Mammary epithelial cell (primary cell): ENCODE measurements at regions of chr9 and their contacts with region 1.

Region 1: DNA sequence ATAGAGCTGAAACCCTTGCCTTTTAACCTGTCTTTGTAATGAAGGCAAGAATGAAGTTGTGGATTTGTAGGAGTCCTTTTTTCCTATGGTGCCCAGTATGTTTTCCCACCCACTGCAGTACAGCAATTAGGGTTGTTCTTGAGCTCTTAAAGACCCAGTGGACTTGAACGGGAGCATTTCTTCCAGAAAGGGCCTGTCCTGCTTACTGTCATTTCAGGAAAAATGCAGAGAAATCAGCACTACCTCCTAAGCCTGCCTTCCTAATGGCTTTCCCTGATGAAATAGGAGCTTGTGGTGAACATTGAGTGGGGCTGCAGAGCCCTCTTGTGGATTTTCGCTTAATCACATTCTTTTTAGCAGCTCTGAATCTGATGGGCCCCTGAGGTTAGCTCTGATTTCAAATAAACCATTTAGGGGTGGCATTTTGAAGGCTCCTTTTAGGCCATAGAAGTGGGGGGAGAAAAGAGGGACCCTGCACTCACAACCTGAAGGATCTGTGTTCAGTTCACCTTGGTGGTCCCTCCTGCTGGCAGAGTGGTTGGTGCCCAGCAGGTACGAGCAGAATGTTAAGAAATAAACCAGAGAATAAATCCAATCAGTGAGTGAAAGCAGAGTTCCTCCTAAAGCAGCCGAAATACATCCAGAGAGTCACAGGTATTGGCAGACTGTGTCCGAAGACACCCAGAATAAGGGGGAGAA is 188.0 kb upstream of the KLF9 start:
- DNase-seq: peak; percentile 64
- H3K4me3 ChIP-seq: no peak overlapping the region
- H3K27ac ChIP-seq: no peak overlapping the region
- H3K4me1 ChIP-seq: peaks cover 17% of the 10 kb centered on the region
- H3K27me3 ChIP-seq: no peaks in the 10 kb centered on the region
- CTCF ChIP-seq: peak; percentile 71 to 80

Region 2: DNA sequence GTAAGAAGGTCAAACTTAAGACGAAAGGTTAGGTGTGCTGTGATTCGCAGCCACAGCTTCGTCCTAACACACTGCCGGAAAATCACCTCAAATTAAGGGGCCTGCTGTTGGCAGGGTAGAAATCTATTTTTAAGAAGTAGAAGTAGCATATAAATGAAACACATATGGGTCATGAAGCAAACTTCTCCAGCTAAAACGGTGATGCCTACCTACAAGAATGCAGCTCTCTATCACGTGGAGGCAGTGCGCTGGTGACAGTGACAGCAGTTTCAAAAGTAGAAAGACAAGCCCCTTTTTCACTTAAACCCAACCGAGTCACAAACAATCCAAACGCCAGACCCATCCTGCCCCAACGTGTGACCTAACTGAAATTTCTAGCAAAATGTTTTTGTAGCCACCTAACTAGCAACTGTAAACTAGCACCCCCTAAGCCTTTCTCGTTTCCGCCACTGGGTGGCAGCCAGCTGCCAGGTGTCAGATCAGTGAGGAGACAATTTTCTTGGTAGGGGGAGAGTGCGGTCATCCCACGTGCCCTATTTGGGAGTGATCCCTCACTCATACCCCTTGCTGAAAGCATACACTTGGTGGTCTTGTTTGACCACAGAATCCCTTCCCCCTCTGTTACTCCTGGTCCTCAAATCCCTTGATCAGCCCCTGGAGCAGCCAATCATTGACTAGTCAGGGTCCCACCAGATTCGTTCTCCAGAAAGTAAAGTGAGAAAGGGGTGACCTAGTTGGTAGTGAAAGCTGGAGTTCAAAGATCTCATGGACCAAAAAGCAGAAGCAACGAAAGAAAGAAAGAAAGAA is 630.6 kb before region 1 on chr9:
- CTCF ChIA-PET with region 1: interaction called, 3 read pairs
- dilution Hi-C with region 1: no loop called
- in situ Hi-C with region 1: loop called in 1 of 2 experiments (anchors 25 kb)
- intact Hi-C with region 1: loop called (anchors 1 kb)
- DNase-seq: peak; percentile 46
- H3K4me3 ChIP-seq: no peak overlapping the region
- H3K27ac ChIP-seq: no peak overlapping the region
- H3K4me1 ChIP-seq: peaks cover 13% of the 10 kb centered on the region
- H3K27me3 ChIP-seq: no peaks in the 10 kb centered on the region
- CTCF ChIP-seq: peak; percentile 89 to 97

Region 3: GRCh38 chr9:70340572-70340971 is 261.9 kb before region 1 on chr9:
- CTCF ChIA-PET with region 1: interaction called, 4 read pairs
- dilution Hi-C with region 1: no loop called
- in situ Hi-C with region 1: loop called in 1 of 2 experiments (anchors 10 kb)
- intact Hi-C with region 1: loop called (anchors 1 kb)
- DNase-seq: no peak
- H3K4me3 ChIP-seq: no peak overlapping the region
- H3K27ac ChIP-seq: no peak overlapping the region
- H3K4me1 ChIP-seq: no peaks in the 10 kb centered on the region
- H3K27me3 ChIP-seq: no peaks in the 10 kb centered on the region
- CTCF ChIP-seq: peak; percentile 31 to 43

Region 4: DNA sequence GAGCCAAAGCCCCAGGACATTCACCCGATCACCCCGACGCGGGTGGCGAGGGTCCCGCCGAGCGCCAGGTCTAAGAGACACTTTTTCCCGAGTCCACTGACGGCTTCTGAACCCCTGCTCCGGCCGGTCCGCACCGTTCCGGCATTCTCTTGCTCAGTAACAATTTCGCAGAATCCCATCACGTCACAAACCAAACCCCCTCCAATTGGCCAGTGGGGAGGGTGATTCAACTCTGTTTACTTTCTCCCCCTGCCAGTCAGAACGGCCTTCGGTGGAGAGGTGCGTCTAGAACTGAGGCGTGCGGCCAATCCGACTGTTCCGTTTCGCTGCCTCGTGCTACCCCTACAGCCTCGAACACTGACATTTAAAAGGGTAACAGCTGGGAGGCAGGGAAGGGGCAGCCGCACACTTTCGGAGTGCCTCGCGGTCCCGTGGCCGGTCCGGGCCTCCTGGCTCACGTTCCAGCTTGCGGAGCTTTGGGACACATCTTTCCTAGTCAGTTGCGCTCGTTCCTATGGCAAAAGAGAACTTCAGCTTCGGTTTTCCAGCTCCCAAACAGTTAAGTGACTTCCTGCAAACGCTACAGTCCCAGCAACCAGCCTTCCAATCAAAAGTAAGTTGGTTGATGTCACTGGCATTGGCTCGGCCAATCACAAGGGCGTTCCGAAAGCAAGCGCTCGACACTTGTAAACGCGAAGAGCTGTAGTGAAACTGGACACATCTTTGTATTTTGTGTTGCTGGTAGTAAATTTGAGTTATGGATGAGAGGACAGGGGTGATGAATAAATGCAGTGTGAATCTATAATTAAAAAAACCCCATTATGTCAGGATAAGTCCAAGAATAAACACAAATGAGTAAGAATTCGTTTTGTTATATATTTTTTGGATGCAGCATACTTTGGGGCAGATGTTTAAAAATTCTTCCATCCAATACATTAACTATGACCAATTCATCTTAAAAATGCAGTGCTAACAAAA is 188.4 kb before region 1 on chr9 and contains the start of gene KLF9:
- CTCF ChIA-PET with region 1: no interaction called
- dilution Hi-C with region 1: no loop called
- in situ Hi-C with region 1: no loop called
- intact Hi-C with region 1: loop called (anchors 5 kb)
- DNase-seq: peak; percentile 97
- H3K4me3 ChIP-seq: peak within 1 kb of the TSS; percentile 53 to 94 (median 78)
- H3K27ac ChIP-seq: peak within 1 kb of the TSS; percentile 89
- H3K4me1 ChIP-seq: peaks cover 29% of the 10 kb centered on the region
- H3K27me3 ChIP-seq: no peaks in the 10 kb centered on the region
- CTCF ChIP-seq: no peak
- total RNA-seq, gene KLF9: 5.5 to 10.8 TPM

Region 5: GRCh38 chr9:70484210-70485130 is 118.0 kb before region 1 on chr9:
- CTCF ChIA-PET with region 1: no interaction called
- dilution Hi-C with region 1: no loop called
- in situ Hi-C with region 1: no loop called
- intact Hi-C with region 1: loop called (anchors 2 kb)
- DNase-seq: peak; percentile 82
- H3K4me3 ChIP-seq: no peak overlapping the region
- H3K27ac ChIP-seq: peak overlapping the region; percentile 44
- H3K4me1 ChIP-seq: peaks cover 32% of the 10 kb centered on the region
- H3K27me3 ChIP-seq: no peaks in the 10 kb centered on the region
- CTCF ChIP-seq: peak; percentile 65 to 71

Region 6: DNA sequence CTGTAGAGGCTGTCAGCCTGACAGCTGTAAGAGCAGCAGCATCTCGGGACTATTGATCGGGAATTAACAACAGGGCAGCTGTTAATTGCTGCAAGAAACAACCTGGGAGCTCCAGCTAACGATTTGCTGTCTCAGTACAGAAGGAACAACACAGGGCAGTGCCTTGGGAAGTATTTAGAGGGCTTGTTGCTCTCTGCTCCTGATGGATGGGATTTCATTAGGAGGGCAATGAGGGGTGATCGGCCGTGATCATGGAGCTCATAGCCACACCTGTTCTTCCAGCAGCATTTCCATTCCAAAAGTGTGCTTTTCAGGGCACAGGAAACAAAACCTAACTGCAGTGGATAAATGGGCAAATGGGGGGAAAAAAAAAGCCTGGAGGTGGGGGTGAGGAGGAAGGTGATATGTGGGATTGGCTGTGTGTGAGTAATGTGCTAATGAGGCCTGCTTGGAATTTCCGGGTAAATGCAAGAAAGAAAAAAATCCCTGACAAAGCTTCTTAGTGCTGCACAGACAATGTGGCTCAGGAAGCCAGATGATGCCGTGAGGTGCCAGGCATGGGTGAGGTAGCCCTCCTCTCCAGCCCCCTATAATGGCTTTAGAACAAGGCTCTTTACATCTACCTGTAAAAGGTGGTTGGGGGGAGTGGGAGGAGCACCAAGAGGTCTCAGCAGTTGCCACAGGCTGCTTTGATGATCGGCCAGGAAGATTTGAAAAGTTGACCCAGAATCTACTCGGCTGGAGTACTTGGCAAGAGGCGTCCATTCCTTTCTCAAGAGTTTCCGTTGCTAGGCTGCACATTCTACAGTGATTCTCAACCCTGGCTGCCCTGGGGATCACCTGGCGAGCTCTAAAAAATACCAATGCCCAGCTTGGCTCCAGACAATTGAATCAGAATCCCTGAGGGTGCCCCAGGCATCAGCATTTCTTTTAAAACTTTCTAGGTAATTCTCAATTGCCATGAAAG is 48.5 kb before region 1 on chr9:
- CTCF ChIA-PET with region 1: interaction called, 3 read pairs
- dilution Hi-C with region 1: no loop called
- in situ Hi-C with region 1: no loop called
- intact Hi-C with region 1: loop called (anchors 5 kb)
- DNase-seq: peak; percentile 80
- H3K4me3 ChIP-seq: no peak overlapping the region
- H3K27ac ChIP-seq: peak overlapping the region; percentile 76
- H3K4me1 ChIP-seq: peaks cover 16% of the 10 kb centered on the region
- H3K27me3 ChIP-seq: no peaks in the 10 kb centered on the region
- CTCF ChIP-seq: no peak

Region 7: DNA sequence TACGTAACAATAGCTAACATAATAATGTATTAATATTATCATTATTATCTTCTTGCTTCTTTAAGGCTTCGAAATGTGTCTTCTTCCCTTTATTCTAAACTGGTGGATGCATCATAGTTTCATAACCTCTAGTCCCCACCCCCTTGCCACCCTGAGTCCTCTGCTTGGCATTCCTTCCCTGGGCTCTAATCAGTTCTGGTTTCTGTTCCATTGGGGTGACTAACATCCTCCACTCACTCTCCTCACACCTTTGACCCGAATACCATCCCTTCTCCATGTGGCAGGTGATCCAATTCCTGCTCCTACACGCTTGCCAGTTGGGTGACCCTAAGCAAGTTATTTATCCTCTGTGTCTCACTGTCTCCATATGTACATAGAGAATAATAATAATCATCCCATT is 232.9 kb after region 1 on chr9:
- CTCF ChIA-PET with region 1: no interaction called
- dilution Hi-C with region 1: no loop called
- in situ Hi-C with region 1: no loop called
- intact Hi-C with region 1: no loop called
- DNase-seq: peak; percentile 75
- H3K4me3 ChIP-seq: no peak overlapping the region
- H3K27ac ChIP-seq: no peak overlapping the region
- H3K4me1 ChIP-seq: no peaks in the 10 kb centered on the region
- H3K27me3 ChIP-seq: peaks cover 1% of the 10 kb centered on the region
- CTCF ChIP-seq: no peak